Activated CD4-positive, alpha-beta T cell treated with anti-CD3 and anti-CD28 coated beads for 36 hours (primary cell): ENCODE measurements at regions of chr1 and their contacts with region 1.

Region 1: GRCh38 chr1:201447911-201448871 is 20.8 kb downstream of the PHLDA3 start:
- DNase-seq: peak; percentile 85
- ATAC-seq: peak; percentile 98
- H3K4me3 Mint-ChIP-seq: no peak overlapping the region
- H3K27ac Mint-ChIP-seq: no peak overlapping the region
- H3K4me1 Mint-ChIP-seq: peaks cover 12% of the 10 kb centered on the region
- H3K27me3 Mint-ChIP-seq: peaks cover 9% of the 10 kb centered on the region

Region 2: GRCh38 chr1:201436393-201436792 is 11.8 kb before region 1 on chr1:
- CTCF ChIA-PET with region 1: interaction called, 24 read pairs
- POLR2A ChIA-PET with region 1: interaction called, 4 read pairs
- intact Hi-C with region 1: no loop called
- DNase-seq: no peak
- ATAC-seq: no peak
- H3K4me3 Mint-ChIP-seq: no peak overlapping the region
- H3K27ac Mint-ChIP-seq: no peak overlapping the region
- H3K4me1 Mint-ChIP-seq: peaks cover 6% of the 10 kb centered on the region
- H3K27me3 Mint-ChIP-seq: peaks cover 8% of the 10 kb centered on the region

Region 3: GRCh38 chr1:201468844-201469511 is 20.8 kb after region 1 on chr1 and contains the start of gene PHLDA3:
- CTCF ChIA-PET with region 1: interaction called, 13 read pairs
- POLR2A ChIA-PET with region 1: no interaction called
- intact Hi-C with region 1: no loop called
- DNase-seq: peak; percentile 73
- ATAC-seq: peak; percentile 84
- H3K4me3 Mint-ChIP-seq: peak within 1 kb of the TSS; percentile 61
- H3K27ac Mint-ChIP-seq: no peak within 1 kb of the TSS
- H3K4me1 Mint-ChIP-seq: peaks cover 4% of the 10 kb centered on the region
- H3K27me3 Mint-ChIP-seq: peaks cover 43% of the 10 kb centered on the region
- total RNA-seq, gene PHLDA3: 2.2 to 3.5 TPM